ENCODE measurements at regions of chr7 and their contacts with region 1.

Region 1: DNA sequence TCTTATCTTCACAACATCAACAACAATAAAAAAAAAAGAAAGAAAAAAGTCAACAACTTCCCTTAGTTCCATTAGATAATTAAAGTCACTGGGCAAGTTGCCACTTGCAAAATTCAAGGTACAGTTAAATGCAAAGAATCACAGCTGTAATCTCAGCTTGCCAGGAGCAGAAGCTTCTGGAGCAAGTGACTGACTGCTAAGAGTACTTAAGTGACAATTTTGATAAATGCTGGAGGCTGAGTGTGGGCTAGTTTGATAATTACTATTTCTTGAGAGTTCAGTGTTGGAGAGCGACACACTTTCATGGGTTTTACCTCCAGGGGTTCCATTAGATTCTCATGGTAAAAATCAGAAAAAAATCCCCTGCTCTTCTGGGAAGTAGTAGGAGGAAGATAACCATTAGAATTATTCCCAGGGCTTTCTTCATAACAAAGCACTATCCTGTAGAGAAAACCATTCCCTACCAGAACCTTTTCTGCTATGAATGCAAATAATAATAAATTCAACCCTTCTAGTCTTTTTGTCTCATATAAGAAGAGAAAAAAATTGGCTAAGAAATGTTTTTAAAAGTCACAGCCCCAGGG is 486.3 kb downstream of the POM121L12 start:
- DNase-seq: no peak
- ATAC-seq: no peak
- H3K4me3 ChIP-seq: no peak overlapping the region
- H3K27ac ChIP-seq: no peak overlapping the region
- H3K4me1 ChIP-seq: no peaks in the 10 kb centered on the region
- H3K27me3 ChIP-seq: no peaks in the 10 kb centered on the region
- CTCF ChIP-seq: no peak
- POLR2A ChIP-seq: no peak
- RAD21 ChIP-seq: no peak

Region 2: DNA sequence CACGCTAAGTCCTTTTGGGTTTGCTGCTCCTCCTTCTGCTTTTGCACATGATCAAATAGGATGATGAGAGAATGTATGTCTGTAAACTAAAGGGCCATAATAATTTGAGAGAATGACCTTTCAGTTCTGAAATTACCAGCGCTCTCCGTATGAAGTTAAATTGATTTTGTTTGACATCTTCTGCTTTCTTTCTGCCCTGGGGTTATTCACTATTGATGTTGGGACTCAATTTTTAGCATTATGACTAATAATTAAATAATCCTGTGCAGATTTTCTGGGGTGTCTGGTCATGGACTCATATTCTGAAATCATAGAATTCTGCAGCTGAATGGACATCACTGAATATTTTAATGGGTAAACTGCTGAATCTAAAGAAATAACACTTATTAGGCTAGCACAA is 63.1 kb before region 1 on chr7:
- CTCF ChIA-PET with region 1: no interaction called
- POLR2A ChIA-PET with region 1: no interaction called
- RAD21 ChIA-PET with region 1: no interaction called
- intact Hi-C with region 1: loop called (anchors 1 kb)
- DNase-seq: no peak
- ATAC-seq: no peak
- H3K4me3 ChIP-seq: no peak overlapping the region
- H3K27ac ChIP-seq: no peak overlapping the region
- H3K4me1 ChIP-seq: no peaks in the 10 kb centered on the region
- H3K27me3 ChIP-seq: no peaks in the 10 kb centered on the region
- CTCF ChIP-seq: no peak
- POLR2A ChIP-seq: no peak
- RAD21 ChIP-seq: no peak